Right ventricle myocardium inferior (tissue), 1 donor: ENCODE measurements at regions of chr5 and their contacts with region 1.

Region 1: GRCh38 chr5:128905571-128906110 is 59.6 kb upstream of the SLC27A6 start:
- DNase-seq: no peak
- ATAC-seq: peak; percentile 59

Region 2: GRCh38 chr5:128844354-128844923 is 61.2 kb before region 1 on chr5:
- intact Hi-C with region 1: no loop called
- DNase-seq: no peak
- ATAC-seq: no peak

Region 3: GRCh38 chr5:129094087-129094923 is 188.7 kb after region 1 on chr5 and contains the start of gene ISOC1:
- intact Hi-C with region 1: loop called (anchors 5 kb)
- DNase-seq: peak; percentile 96
- ATAC-seq: peak; percentile 98
- total RNA-seq, gene ISOC1: 120 TPM